PC-3 (cell line): ENCODE measurements at regions of chr4 and their contacts with region 1.

Region 1: DNA sequence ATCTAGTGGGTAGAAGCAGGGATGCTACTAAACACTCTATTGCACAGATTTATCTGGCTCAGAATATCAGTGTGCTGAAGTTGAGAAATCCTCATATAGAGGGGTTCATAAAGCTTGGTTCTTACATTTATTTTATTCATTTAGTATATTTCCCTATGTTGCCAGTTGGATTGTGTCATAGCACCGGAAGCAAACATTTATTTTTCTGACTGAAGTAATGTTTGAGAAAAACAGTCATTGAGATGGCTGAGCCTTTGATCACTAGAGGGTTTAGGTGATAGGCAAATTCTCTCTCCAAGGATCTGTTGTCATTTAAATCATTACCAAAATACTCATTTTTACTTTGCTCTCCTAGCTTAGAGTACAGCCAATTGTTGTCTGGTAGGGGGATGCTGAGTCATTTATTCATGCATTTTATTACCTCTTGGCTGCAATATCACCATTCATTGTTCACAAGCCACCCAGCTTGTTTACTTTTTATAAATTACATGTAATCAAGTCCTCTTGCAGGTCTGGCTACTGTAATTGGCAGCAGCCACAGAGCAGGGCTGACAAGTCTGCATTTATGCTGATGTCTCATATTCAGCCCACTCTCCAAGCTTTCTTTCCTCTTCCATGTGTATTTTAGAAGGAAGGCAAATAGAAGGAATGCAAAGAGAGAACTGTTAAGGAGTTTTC is 15.2 kb downstream of the GAB1 start:
- DNase-seq: peak; percentile 86
- ATAC-seq: peak; percentile 93
- H3K4me3 ChIP-seq: peak overlapping the region; percentile 15; the same call in 1 of the 2 replicates
- H3K27ac ChIP-seq: peak overlapping the region; percentile 55
- H3K4me1 ChIP-seq: peaks cover 40% of the 10 kb centered on the region
- H3K27me3 ChIP-seq: no peaks in the 10 kb centered on the region
- CTCF ChIP-seq: no peak

Region 2: GRCh38 chr4:143381171-143382118 is 29.5 kb after region 1 on chr4:
- CTCF ChIA-PET with region 1: no interaction called
- POLR2A ChIA-PET with region 1: no interaction called
- intact Hi-C with region 1: loop called (anchors 2 kb)
- DNase-seq: peak; percentile 88
- ATAC-seq: peak; percentile 94
- H3K4me3 ChIP-seq: peak overlapping the region; percentile 27; the same call in 1 of the 2 replicates
- H3K27ac ChIP-seq: peak overlapping the region; percentile 55
- H3K4me1 ChIP-seq: peaks cover 23% of the 10 kb centered on the region
- H3K27me3 ChIP-seq: no peaks in the 10 kb centered on the region
- CTCF ChIP-seq: no peak

Region 3: DNA sequence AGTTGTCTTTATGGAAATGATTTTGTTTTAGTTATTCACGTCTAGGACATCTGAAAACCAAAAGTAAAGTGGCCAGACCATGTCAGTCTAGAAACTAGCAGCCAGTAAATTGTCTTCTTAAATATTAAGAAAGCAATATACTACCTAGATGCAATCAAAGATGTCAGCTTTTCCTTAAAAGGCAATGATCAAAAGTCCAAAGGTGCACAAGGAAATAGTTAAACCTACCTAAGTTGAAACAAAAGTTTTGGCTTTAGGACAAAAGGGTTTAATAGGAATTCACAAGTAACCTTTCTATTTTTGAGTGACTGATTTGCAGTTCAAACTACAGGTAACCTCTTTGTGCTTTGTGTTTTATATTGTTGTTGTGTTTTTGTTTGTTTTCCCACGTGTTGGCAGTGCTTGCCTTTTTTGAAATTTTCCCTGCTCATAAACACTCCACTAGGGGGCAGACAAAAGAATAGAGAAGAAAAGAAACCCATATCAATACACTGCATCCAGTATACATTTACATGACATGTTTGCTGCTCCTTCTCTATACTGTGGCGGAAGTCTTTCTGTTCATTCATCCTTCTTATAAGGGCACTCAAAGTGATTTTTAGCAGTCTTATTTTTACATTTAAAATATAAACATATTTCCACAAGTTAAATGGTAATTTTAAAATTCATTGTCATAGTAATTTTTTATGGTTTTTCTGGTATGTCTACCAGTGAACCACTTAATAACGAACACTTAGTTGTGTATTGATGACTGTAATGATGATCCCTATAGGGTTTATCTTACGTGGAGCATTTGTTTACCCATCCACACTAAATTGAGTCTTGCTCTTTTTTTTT is 47.4 kb after region 1 on chr4:
- CTCF ChIA-PET with region 1: no interaction called
- POLR2A ChIA-PET with region 1: no interaction called
- intact Hi-C with region 1: loop called (anchors 2 kb)
- DNase-seq: peak; percentile 75
- ATAC-seq: no peak
- H3K4me3 ChIP-seq: no peak overlapping the region
- H3K27ac ChIP-seq: no peak overlapping the region
- H3K4me1 ChIP-seq: peaks cover 16% of the 10 kb centered on the region
- H3K27me3 ChIP-seq: no peaks in the 10 kb centered on the region
- CTCF ChIP-seq: peak; percentile 92